Activated CD4-positive, alpha-beta T cell treated with anti-CD3 and anti-CD28 coated beads for 36 hours (primary cell): ENCODE measurements at regions of chr14 and their contacts with region 1.

Region 1: DNA sequence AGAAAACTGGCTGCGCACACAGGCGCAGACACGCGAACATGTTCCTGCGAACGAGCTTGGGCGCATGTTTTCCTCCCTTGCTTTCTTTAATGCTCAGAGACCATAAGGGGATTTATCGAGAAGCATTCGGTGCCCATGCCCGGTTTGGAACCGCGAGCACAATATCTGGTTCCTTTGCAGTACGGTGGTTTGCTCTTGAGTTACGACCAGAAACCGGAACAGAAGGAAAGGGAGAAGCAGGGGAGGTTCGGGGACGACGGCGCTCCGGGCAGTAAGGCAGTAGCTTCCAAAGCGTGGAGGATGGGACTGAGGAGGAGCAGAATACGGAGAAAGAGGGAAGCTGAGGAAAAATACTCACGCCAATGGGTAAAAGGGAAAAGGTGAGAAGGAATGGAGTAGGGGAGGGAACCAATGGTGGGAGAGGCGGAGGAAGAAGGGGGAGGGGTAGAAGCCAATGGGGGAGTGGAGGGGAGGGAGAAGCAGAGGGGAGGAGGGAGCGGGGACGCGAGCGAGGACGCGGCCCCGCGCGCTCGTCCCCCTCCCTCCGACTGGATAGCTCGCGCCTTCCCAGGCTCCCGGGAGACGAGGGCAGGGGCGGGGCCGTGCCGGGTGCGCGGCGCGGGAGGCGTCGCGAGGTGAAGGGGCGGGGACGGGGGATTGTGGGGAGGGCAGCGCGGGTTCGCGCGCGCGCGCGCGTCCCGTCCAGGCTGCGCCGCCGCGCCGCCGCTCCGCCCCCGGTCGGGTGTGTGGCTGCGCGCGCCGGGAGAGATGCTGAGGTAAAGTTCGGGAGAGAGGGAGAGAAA is 625 bp upstream of the ARHGAP5 start:
- DNase-seq: peak; percentile 91
- ATAC-seq: peak; percentile 68
- H3K4me3 Mint-ChIP-seq: peak overlapping the region; percentile 94
- H3K27ac Mint-ChIP-seq: peak overlapping the region; percentile 95
- H3K4me1 Mint-ChIP-seq: peaks cover 31% of the 10 kb centered on the region
- H3K27me3 Mint-ChIP-seq: peaks cover 2% of the 10 kb centered on the region

Region 2: GRCh38 chr14:30621940-30622830 is 1454.3 kb before region 1 on chr14 and contains the start of gene SCFD1:
- CTCF ChIA-PET with region 1: no interaction called
- POLR2A ChIA-PET with region 1: no interaction called
- intact Hi-C with region 1: loop called in 1 of 2 experiments (anchors 2 kb)
- DNase-seq: peak; percentile 97
- ATAC-seq: peak; percentile 98
- H3K4me3 Mint-ChIP-seq: peak within 1 kb of the TSS; percentile 78
- H3K27ac Mint-ChIP-seq: peak within 1 kb of the TSS; percentile 90
- H3K4me1 Mint-ChIP-seq: peaks cover 39% of the 10 kb centered on the region
- H3K27me3 Mint-ChIP-seq: no peaks in the 10 kb centered on the region
- total RNA-seq, gene SCFD1: 47.5 to 55.3 TPM

Region 3: GRCh38 chr14:31420319-31421111 is 656.0 kb before region 1 on chr14 and contains the start of gene HEATR5A:
- CTCF ChIA-PET with region 1: no interaction called
- POLR2A ChIA-PET with region 1: no interaction called
- intact Hi-C with region 1: loop called in 1 of 2 experiments (anchors 1 kb)
- DNase-seq: peak; percentile 94
- ATAC-seq: peak; percentile 91
- H3K4me3 Mint-ChIP-seq: peak within 1 kb of the TSS; percentile 94
- H3K27ac Mint-ChIP-seq: peak within 1 kb of the TSS; percentile 88
- H3K4me1 Mint-ChIP-seq: peaks cover 25% of the 10 kb centered on the region
- H3K27me3 Mint-ChIP-seq: peaks cover 3% of the 10 kb centered on the region
- total RNA-seq, gene HEATR5A: 8.5 to 9.4 TPM

Region 4: DNA sequence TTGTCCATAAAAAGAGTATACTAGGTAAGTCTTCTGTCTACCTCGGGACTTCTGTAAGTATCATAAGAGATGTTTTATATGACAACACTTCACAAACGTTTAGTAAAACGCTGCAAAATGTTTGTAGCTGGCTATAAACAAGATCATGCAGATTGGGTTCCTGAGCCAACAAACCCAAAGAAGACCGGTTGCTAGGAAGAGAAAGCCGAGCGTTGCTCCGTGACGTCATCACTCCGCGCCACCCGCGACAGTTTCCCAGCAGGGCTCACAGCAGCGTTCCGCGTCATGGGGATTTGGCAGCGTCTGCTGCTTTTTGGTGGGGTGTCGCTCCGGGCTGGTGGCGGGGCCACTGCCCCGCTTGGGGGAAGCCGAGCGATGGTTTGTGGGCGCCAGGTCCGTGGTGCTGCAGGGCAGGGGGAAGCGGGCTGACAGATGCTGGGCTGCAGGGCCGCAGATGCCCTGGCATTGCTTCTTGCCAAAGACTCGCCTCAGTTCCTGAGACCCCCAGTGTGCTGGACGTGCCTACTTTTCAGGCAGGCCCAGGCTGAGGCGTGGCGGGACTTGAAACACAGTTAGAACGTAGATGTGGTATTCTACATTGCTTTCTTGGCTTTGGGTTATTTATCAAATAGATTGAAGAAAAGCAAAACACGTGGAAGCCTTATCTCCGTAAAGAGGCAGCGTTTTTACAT is 515.2 kb before region 1 on chr14 and contains the start of gene NUBPL:
- CTCF ChIA-PET with region 1: no interaction called
- POLR2A ChIA-PET with region 1: no interaction called
- intact Hi-C with region 1: loop called in 1 of 2 experiments (anchors 1 kb)
- DNase-seq: peak; percentile 98
- ATAC-seq: peak; percentile 96
- H3K4me3 Mint-ChIP-seq: peak within 1 kb of the TSS; percentile 92
- H3K27ac Mint-ChIP-seq: peak within 1 kb of the TSS; percentile 95
- H3K4me1 Mint-ChIP-seq: peaks cover 23% of the 10 kb centered on the region
- H3K27me3 Mint-ChIP-seq: peaks cover 6% of the 10 kb centered on the region
- total RNA-seq, gene NUBPL: 9.5 to 14.9 TPM

Region 5: GRCh38 chr14:32102152-32102787 is 25.8 kb after region 1 on chr14:
- CTCF ChIA-PET with region 1: interaction called, 3 read pairs
- POLR2A ChIA-PET with region 1: no interaction called
- intact Hi-C with region 1: loop called (anchors 1 to 2 kb)
- DNase-seq: peak; percentile 6
- ATAC-seq: peak; percentile 93
- H3K4me3 Mint-ChIP-seq: no peak overlapping the region
- H3K27ac Mint-ChIP-seq: peak overlapping the region; percentile 78
- H3K4me1 Mint-ChIP-seq: peaks cover 30% of the 10 kb centered on the region
- H3K27me3 Mint-ChIP-seq: no peaks in the 10 kb centered on the region

Region 6: GRCh38 chr14:32252030-32252670 is 175.7 kb after region 1 on chr14:
- CTCF ChIA-PET with region 1: interaction called, 81 read pairs
- POLR2A ChIA-PET with region 1: no interaction called
- intact Hi-C with region 1: loop called (anchors 1 kb)
- DNase-seq: peak; percentile 56
- ATAC-seq: peak; percentile 93
- H3K4me3 Mint-ChIP-seq: no peak overlapping the region
- H3K27ac Mint-ChIP-seq: no peak overlapping the region
- H3K4me1 Mint-ChIP-seq: no peaks in the 10 kb centered on the region
- H3K27me3 Mint-ChIP-seq: no peaks in the 10 kb centered on the region

Region 7: DNA sequence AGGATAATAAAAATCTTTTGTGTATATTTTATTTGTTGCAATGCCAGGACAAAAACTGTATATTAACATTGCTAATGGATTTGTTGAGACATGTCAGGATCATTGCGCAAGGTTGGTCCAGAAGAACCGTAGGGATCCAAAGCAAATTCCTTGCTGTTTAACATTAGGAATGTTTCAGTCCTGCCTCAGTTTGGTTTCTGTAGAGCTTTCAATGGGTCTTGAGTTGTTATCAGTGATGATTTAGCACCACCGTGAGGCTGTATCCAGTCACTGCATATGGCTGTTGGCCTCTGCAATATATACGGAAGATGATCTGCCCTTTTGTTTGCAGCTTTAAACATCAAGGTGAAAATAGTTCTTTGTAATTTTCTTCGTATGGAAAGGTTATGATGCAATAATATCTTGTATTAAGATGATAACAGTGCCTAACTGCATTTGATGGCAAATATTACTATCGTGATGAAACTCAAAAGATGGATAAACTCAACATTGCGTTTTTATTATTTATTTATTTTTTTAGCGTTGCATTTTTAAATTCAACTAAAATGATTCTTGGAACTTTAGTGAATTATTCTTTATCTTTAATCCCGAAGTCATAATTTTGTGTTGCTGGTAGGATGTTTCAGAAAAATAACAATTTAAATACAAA is 483.9 kb after region 1 on chr14:
- CTCF ChIA-PET with region 1: no interaction called
- POLR2A ChIA-PET with region 1: no interaction called
- intact Hi-C with region 1: loop called in 1 of 2 experiments (anchors 5 kb)
- DNase-seq: peak; percentile 52
- ATAC-seq: no peak
- H3K4me3 Mint-ChIP-seq: no peak overlapping the region
- H3K27ac Mint-ChIP-seq: no peak overlapping the region
- H3K4me1 Mint-ChIP-seq: peaks cover 12% of the 10 kb centered on the region
- H3K27me3 Mint-ChIP-seq: no peaks in the 10 kb centered on the region